Heart left ventricle (tissue), 16 donors: ENCODE measurements at regions of chr10 and their contacts with region 1.

Region 1: GRCh38 chr10:55400075-55400849 is 599.2 kb upstream of the PCDH15 start:
- DNase-seq: no peak
- ATAC-seq: no peak
- H3K4me3 ChIP-seq: no peak overlapping the region
- H3K27ac ChIP-seq: no peak overlapping the region
- H3K4me1 ChIP-seq: no peaks in the 10 kb centered on the region
- H3K27me3 ChIP-seq: no peaks in the 10 kb centered on the region
- CTCF ChIP-seq: no peak
- POLR2A ChIP-seq: no peak

Region 2: DNA sequence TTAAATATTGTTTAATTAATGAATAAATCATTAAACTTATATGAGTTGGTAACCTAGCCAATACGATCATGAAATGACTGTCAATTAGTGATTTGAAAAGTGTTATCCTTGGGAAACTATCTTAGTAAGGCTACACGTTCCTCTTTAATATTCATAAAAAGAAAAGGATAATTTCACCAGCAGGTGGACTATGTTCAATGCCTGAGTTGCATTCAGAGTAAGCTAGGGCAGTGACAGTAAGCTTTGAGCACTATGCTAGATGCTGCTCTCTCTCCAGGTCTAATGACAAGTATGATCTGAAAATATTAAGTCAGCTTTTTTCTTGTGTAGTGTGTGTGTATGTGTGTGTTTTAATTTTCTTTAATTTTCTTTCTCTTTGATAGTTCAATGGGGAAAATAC is 112.9 kb before region 1 on chr10:
- intact Hi-C with region 1: loop called in 1 of 10 experiments (anchors 10 kb)
- DNase-seq: no peak
- ATAC-seq: no peak
- H3K4me3 ChIP-seq: no peak overlapping the region
- H3K27ac ChIP-seq: no peak overlapping the region
- H3K4me1 ChIP-seq: no peaks in the 10 kb centered on the region
- H3K27me3 ChIP-seq: no peaks in the 10 kb centered on the region
- CTCF ChIP-seq: peak in 6 of 12 donors; percentile 7 to 39 (median 18)
- POLR2A ChIP-seq: no peak

Region 3: GRCh38 chr10:55653531-55653930 is 253.3 kb after region 1 on chr10:
- intact Hi-C with region 1: no loop called
- DNase-seq: no peak
- ATAC-seq: no peak
- H3K4me3 ChIP-seq: no peak overlapping the region
- H3K27ac ChIP-seq: no peak overlapping the region
- H3K4me1 ChIP-seq: no peaks in the 10 kb centered on the region
- H3K27me3 ChIP-seq: no peaks in the 10 kb centered on the region
- CTCF ChIP-seq: no peak
- POLR2A ChIP-seq: no peak